ENCODE measurements at regions of chr2 and their contacts with region 1.

Region 1: GRCh38 chr2:190088917-190089316 is 26.4 kb upstream of the MSTN start:
- DNase-seq: peak in 1 of 2 donors; percentile 36
- ATAC-seq: peak; percentile 74 to 84
- H3K4me3 ChIP-seq: no peak overlapping the region
- H3K27ac ChIP-seq: no peak overlapping the region
- H3K4me1 ChIP-seq: peaks cover 0 to 9% of the 10 kb centered on the region in 2 donors
- H3K27me3 ChIP-seq: no peaks in the 10 kb centered on the region
- CTCF ChIP-seq: peak; percentile 66 to 78 (median 68)
- POLR2A ChIP-seq: no peak

Region 2: GRCh38 chr2:190121971-190122370 is 33.1 kb after region 1 on chr2:
- in situ Hi-C with region 1: loop called in 1 of 4 experiments (anchors 5 kb)
- intact Hi-C with region 1: loop called (anchors 1 kb)
- DNase-seq: no peak
- ATAC-seq: no peak
- H3K4me3 ChIP-seq: no peak overlapping the region
- H3K27ac ChIP-seq: no peak overlapping the region
- H3K4me1 ChIP-seq: peaks cover 8% of the 10 kb centered on the region in 2 donors
- H3K27me3 ChIP-seq: no peaks in the 10 kb centered on the region
- CTCF ChIP-seq: peak in 4 of 5 experiments; percentile 24 to 62 (median 41)
- POLR2A ChIP-seq: no peak

Region 3: GRCh38 chr2:190277234-190278112 is 188.6 kb after region 1 on chr2:
- in situ Hi-C with region 1: loop called (anchors 5 to 25 kb)
- intact Hi-C with region 1: loop called (anchors 2 kb)
- DNase-seq: no peak
- ATAC-seq: no peak
- H3K4me3 ChIP-seq: no peak overlapping the region
- H3K27ac ChIP-seq: no peak overlapping the region
- H3K4me1 ChIP-seq: peaks cover 7 to 15% of the 10 kb centered on the region in 2 donors
- H3K27me3 ChIP-seq: no peaks in the 10 kb centered on the region
- CTCF ChIP-seq: peak in 2 of 5 experiments; percentile 14 to 37
- POLR2A ChIP-seq: no peak

Region 4: DNA sequence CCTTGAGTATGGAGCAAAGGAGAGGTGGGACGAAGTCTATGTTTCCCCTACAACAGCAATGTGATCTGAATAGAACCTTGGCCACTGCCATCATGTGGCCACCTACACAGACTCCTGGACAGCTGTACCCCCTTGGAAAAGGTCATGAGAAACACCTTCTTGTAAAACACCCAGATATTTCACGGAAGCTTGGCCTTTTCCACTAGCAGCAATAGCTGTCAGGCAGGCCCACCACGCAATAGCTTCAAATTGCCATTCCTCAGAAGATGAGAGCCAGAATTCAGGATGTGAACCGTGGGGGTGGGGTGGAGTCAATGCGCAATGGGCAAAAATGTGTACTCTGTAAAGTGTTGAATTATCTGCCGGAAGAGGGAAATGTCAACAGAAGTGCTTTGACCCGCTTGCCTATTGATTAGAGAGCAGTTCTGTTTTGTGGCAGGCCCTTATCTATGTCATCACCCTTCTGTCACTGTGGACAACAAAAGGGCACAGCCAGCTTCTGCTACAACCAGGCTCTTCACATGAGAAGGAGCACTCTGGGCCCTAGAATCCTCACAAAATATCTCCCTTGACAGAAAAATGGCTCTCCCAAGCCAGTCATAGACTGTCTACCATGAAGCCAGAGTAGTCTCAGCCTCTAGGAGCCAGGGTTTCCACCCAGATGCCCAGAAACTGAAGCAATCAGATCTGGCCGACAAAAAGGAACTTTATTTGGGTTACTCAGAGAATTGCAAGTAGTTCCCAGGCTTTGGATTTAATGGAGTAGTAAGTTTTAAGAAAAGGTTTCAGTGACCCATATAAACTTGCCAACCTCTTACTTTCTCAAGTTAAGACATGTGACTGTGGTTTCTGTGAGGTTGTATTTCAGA is 264.0 kb after region 1 on chr2:
- in situ Hi-C with region 1: loop called in 1 of 4 experiments (anchors 25 kb)
- intact Hi-C with region 1: no loop called
- DNase-seq: no peak
- ATAC-seq: peak; percentile 60 to 65
- H3K4me3 ChIP-seq: no peak overlapping the region
- H3K27ac ChIP-seq: peak overlapping the region; percentile 29 to 72 (median 58)
- H3K4me1 ChIP-seq: peaks cover 25 to 36% of the 10 kb centered on the region in 2 donors
- H3K27me3 ChIP-seq: no peaks in the 10 kb centered on the region
- CTCF ChIP-seq: no peak
- POLR2A ChIP-seq: no peak

Region 5: GRCh38 chr2:190376591-190377245 is 287.8 kb after region 1 on chr2:
- in situ Hi-C with region 1: loop called in 3 of 4 experiments (anchors 5 to 25 kb)
- intact Hi-C with region 1: loop called (anchors 2 kb)
- DNase-seq: no peak
- ATAC-seq: no peak
- H3K4me3 ChIP-seq: no peak overlapping the region
- H3K27ac ChIP-seq: no peak overlapping the region
- H3K4me1 ChIP-seq: peaks cover 0 to 4% of the 10 kb centered on the region in 2 donors
- H3K27me3 ChIP-seq: no peaks in the 10 kb centered on the region
- CTCF ChIP-seq: no peak
- POLR2A ChIP-seq: no peak

Region 6: DNA sequence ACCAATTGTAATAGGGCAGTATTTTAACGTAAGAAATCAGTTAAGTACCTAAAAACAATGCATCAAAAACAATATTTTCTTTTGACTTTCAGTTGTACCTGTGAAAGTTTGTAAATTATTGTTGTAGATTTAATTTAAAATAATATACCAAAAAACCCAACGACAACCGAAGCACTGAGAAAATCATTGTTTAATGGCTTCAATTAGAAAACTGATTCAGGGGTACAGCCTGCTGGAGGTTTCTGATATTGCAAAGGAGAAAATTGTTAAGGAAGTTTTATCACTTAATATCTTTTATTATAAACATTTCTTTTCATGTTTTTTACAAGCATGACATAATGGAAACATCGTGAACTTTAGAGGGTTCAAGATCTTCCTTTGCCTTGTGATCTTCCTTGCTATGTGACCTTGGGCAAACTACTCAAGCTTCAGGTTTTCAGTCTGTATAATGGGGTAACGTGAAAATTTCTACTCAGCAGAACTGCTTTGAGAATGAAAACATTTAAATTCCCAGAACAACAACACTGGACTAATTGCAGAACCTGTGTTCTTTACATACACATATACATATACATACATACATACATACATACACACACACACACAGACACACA is 715.4 kb after region 1 on chr2:
- in situ Hi-C with region 1: loop called in 1 of 4 experiments (anchors 25 kb)
- intact Hi-C with region 1: no loop called
- DNase-seq: no peak
- ATAC-seq: no peak
- H3K4me3 ChIP-seq: no peak overlapping the region
- H3K27ac ChIP-seq: no peak overlapping the region
- H3K4me1 ChIP-seq: no peaks in the 10 kb centered on the region
- H3K27me3 ChIP-seq: no peaks in the 10 kb centered on the region
- CTCF ChIP-seq: peak; percentile 29 to 56 (median 45)
- POLR2A ChIP-seq: no peak